Activated T-helper 1 cell treated with anti-CD3 and anti-CD28 coated beads, Interleukin-12 subunit alpha, Interleukin-12 subunit beta, Interleukin-2, Interleukin-4 antibody, amounts not matched to agents 30 ng/mL and 10 ng/mL and 1 ng/mL, durations not matched to agents 14 hours and 24 hours and 36 hours (primary cell): ENCODE measurements at regions of chr10 and their contacts with region 1.

Region 1: GRCh38 chr10:6473901-6474370 is 106.1 kb downstream of the PRKCQ start:
- DNase-seq: peak; percentile 44
- H3K4me3 Mint-ChIP-seq: peak overlapping the region; percentile 86
- H3K27ac Mint-ChIP-seq: peak overlapping the region; percentile 97
- H3K4me1 Mint-ChIP-seq: peaks cover 89% of the 10 kb centered on the region
- H3K27me3 Mint-ChIP-seq: no peaks in the 10 kb centered on the region

Region 2: GRCh38 chr10:5466418-5467154 is 1007.4 kb before region 1 on chr10:
- intact Hi-C with region 1: no loop called
- DNase-seq: no peak
- H3K4me3 Mint-ChIP-seq: no peak overlapping the region
- H3K27ac Mint-ChIP-seq: no peak overlapping the region
- H3K4me1 Mint-ChIP-seq: no peaks in the 10 kb centered on the region
- H3K27me3 Mint-ChIP-seq: no peaks in the 10 kb centered on the region

Region 3: DNA sequence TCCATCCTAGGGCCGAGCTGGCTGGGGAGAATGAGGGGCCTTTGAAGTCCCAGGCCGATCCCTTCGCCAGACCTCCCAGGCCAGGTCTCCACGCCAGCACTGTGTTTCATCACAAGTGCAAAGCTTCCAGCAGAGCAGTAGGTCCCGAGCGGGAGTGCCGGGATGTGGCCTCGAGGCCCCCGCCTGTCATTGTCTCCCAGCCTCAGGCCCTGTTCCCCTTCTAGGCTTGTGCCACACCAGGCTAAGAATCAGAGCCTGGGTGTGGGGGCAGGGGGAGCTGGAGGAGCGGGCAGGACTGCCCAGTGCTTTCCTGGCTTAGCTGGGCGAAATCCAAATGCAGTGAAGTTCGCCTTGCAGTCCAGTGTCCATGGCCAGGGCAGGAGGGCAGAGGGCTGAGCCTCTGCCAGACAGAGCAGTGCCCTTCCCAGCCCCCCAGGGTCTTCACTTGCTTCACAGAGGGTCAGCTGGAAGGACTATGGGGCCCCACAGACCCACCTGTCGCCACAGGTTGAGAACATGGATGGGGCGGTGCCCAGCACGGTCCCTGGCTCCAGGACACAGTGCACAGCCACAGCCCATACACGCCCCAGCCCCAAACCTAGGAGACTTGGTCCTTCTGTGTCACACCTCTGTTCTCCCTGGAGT is 291.4 kb before region 1 on chr10:
- intact Hi-C with region 1: no loop called
- DNase-seq: no peak
- H3K4me3 Mint-ChIP-seq: no peak overlapping the region
- H3K27ac Mint-ChIP-seq: no peak overlapping the region
- H3K4me1 Mint-ChIP-seq: peaks cover 28% of the 10 kb centered on the region
- H3K27me3 Mint-ChIP-seq: no peaks in the 10 kb centered on the region

Region 4: DNA sequence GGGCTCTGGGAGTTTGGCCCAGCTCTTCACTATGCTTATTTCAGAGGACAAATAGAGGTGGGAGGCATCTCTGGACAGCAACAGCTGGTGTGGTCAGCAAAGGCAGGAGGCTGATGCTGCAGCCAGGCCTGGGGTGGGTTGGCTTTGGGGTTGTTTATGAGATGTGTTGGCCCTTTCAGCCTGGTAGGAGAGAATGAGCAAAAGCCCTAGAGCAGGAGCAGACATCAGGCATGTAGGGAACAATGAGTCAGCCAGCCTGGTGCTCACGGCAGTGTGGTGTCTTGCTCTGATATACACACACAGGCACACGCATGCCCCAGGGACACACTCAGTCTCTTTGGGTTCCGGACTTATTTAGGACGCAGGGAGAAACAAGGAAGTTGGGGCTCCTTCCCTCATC is 50.9 kb before region 1 on chr10:
- intact Hi-C with region 1: loop called (anchors 2 kb)
- DNase-seq: no peak
- H3K4me3 Mint-ChIP-seq: no peak overlapping the region
- H3K27ac Mint-ChIP-seq: peak overlapping the region; percentile 93
- H3K4me1 Mint-ChIP-seq: peaks cover 26% of the 10 kb centered on the region
- H3K27me3 Mint-ChIP-seq: no peaks in the 10 kb centered on the region

Region 5: DNA sequence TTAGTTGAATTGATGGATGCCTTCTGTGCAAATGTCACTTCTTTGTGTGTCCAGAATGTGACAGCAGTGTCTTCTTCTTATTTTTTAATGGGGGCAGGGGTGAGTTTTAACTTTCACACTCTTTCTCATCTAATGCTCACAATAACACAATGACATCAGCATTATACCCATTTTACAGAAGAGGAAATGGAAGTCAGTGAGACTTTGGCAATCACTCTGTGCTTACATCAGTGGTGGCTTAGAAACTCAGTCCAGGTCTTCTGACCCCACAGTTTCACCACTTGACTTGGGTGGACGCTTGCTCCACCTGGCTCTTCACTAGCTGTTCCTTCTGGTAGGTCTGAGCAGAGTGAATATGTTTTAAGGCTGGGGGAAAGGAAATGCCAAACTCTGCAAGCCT is 17.9 kb before region 1 on chr10:
- intact Hi-C with region 1: no loop called
- DNase-seq: no peak
- H3K4me3 Mint-ChIP-seq: no peak overlapping the region
- H3K27ac Mint-ChIP-seq: no peak overlapping the region
- H3K4me1 Mint-ChIP-seq: peaks cover 9% of the 10 kb centered on the region
- H3K27me3 Mint-ChIP-seq: no peaks in the 10 kb centered on the region

Region 6: DNA sequence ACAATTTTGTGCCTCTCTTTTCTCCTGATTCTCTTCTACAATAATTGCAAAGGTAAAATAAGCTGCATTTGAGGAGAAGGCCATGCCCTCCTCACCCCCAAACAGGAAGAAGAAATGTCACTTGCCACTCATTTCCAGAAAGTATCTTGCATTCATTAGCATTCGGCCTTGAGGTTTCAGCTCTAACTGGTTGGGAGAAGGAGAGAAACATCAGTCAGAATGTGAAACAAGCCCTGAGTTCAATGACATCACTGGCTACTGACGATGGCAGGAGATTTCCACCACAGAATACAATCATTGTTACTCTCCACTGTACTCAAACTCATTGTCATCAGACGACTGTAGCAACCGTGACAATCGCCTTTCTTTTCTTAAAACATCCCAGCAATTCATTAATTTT is 33.4 kb after region 1 on chr10:
- intact Hi-C with region 1: loop called (anchors 2 kb)
- DNase-seq: peak; percentile 57
- H3K4me3 Mint-ChIP-seq: peak overlapping the region; percentile 60
- H3K27ac Mint-ChIP-seq: peak overlapping the region; percentile 88
- H3K4me1 Mint-ChIP-seq: peaks cover 73% of the 10 kb centered on the region
- H3K27me3 Mint-ChIP-seq: no peaks in the 10 kb centered on the region

Region 7: GRCh38 chr10:6563075-6563474 is 89.1 kb after region 1 on chr10:
- intact Hi-C with region 1: loop called (anchors 1 kb)
- DNase-seq: peak; percentile 43
- H3K4me3 Mint-ChIP-seq: peak overlapping the region; percentile 74
- H3K27ac Mint-ChIP-seq: peak overlapping the region; percentile 81
- H3K4me1 Mint-ChIP-seq: peaks cover 81% of the 10 kb centered on the region
- H3K27me3 Mint-ChIP-seq: no peaks in the 10 kb centered on the region

Region 8: GRCh38 chr10:7184660-7185366 is 710.9 kb after region 1 on chr10:
- intact Hi-C with region 1: no loop called
- DNase-seq: no peak
- H3K4me3 Mint-ChIP-seq: peak overlapping the region; percentile 34
- H3K27ac Mint-ChIP-seq: peak overlapping the region; percentile 61
- H3K4me1 Mint-ChIP-seq: peaks cover 59% of the 10 kb centered on the region
- H3K27me3 Mint-ChIP-seq: no peaks in the 10 kb centered on the region